ENCODE measurements at regions of chr12 and their contacts with region 1.

Region 1: DNA sequence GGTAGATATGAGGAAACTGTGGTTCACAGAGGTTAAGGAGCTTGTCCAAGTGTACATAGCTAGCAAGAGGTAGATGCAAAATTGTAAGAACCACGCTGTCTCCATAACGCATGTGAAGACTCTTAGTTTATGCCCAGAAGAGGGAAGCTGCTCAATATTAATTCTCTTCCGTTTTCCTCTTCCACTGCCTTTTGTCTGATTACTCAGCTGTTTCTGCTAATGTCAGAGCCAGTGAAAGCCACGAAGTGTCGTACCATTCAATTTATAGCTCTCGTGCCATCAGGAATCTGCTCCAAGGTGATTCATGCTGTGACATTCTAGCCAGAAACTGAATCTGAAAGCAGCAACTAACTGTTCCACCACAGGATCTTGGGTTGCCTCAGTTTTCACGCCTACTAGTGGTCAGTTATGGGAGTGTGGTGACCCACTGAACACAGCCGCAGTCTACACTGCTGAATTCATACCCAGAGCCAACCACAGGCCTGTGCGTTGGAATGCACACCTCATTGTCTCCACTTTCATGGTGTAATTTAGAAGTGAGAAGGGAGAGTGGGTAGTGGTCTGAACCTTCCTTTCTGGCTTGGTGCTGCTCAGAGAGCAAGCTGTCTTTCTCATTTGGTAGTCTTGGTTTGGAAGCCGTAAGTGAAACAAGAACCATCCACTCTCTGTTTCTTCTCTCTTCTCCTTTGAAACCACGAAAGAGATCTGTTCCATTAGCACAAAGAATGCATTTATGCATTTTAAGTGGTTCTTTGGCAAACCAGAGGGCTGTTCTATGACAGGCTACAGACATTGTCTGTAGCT is 74.2 kb upstream of the NAP1L1 start:
- DNase-seq: peak in 34 of 35 experiments; percentile 8 to 70 (median 30)
- ATAC-seq: peak; percentile 83 to 96 (median 94)
- H3K4me3 ChIP-seq: no peak overlapping the region
- H3K4me3 Mint-ChIP-seq: peak overlapping the region; percentile 17 to 38 (median 37)
- H3K27ac ChIP-seq: peak overlapping the region; percentile 6
- H3K27ac Mint-ChIP-seq: peak overlapping the region; percentile 53 to 57
- H3K4me1 ChIP-seq: peaks cover 0 to 5% of the 10 kb centered on the region in 2 experiments
- H3K4me1 Mint-ChIP-seq: peaks cover 8 to 12% (median 11%) of the 10 kb centered on the region in 3 donors
- H3K27me3 ChIP-seq: no peaks in the 10 kb centered on the region
- H3K27me3 Mint-ChIP-seq: no peaks in the 10 kb centered on the region

Region 2: GRCh38 chr12:76080729-76081415 is 77.8 kb before region 1 on chr12:
- CTCF ChIA-PET with region 1: interaction called in 1 of 2 experiments, 6 read pairs
- POLR2A ChIA-PET with region 1: interaction called in 1 of 2 experiments, 10 read pairs
- DNase-seq: peak in 6 of 35 experiments; percentile 3 to 36 (median 9)
- ATAC-seq: no peak
- H3K4me3 ChIP-seq: no peak overlapping the region
- H3K4me3 Mint-ChIP-seq: peak overlapping the region in 1 of 3 donors; percentile 13
- H3K27ac ChIP-seq: no peak overlapping the region
- H3K27ac Mint-ChIP-seq: no peak overlapping the region
- H3K4me1 ChIP-seq: peaks cover 17 to 21% of the 10 kb centered on the region in 2 experiments
- H3K4me1 Mint-ChIP-seq: peaks cover 78 to 85% (median 78%) of the 10 kb centered on the region in 3 donors
- H3K27me3 ChIP-seq: no peaks in the 10 kb centered on the region
- H3K27me3 Mint-ChIP-seq: no peaks in the 10 kb centered on the region

Measured in T-cell (primary cell).